ENCODE measurements at regions of chr4 and their contacts with region 1.

Region 1: DNA sequence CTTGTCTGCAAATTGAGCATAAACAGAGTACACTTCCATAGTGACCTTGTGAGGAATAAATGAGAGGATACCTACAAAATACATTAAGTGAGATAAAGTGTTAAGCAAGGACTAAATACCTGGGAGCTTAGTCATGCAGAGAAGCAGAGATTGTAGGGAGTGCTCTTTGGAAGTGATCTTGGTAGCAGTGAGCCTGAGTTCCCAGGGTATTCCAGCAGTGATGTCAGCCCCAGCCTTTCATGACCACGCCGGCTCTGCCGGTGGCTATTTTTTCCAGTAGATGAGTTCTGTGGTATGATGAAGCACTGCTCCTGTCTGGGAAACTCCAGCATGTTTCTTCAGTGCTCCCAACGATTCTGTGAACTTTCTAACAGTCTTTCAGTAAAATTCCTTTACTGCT is 391.5 kb upstream of the IGFBP7 start:
- DNase-seq: no peak
- H3K4me3 ChIP-seq: no peak overlapping the region
- H3K27ac ChIP-seq: peak overlapping the region; percentile 23 to 66 (median 60)
- H3K4me1 ChIP-seq: peaks cover 10 to 33% (median 30%) of the 10 kb centered on the region in 4 donors
- H3K27me3 ChIP-seq: no peaks in the 10 kb centered on the region
- CTCF ChIP-seq: no peak
- EP300 ChIP-seq: no peak
- POLR2A ChIP-seq: no peak

Region 2: DNA sequence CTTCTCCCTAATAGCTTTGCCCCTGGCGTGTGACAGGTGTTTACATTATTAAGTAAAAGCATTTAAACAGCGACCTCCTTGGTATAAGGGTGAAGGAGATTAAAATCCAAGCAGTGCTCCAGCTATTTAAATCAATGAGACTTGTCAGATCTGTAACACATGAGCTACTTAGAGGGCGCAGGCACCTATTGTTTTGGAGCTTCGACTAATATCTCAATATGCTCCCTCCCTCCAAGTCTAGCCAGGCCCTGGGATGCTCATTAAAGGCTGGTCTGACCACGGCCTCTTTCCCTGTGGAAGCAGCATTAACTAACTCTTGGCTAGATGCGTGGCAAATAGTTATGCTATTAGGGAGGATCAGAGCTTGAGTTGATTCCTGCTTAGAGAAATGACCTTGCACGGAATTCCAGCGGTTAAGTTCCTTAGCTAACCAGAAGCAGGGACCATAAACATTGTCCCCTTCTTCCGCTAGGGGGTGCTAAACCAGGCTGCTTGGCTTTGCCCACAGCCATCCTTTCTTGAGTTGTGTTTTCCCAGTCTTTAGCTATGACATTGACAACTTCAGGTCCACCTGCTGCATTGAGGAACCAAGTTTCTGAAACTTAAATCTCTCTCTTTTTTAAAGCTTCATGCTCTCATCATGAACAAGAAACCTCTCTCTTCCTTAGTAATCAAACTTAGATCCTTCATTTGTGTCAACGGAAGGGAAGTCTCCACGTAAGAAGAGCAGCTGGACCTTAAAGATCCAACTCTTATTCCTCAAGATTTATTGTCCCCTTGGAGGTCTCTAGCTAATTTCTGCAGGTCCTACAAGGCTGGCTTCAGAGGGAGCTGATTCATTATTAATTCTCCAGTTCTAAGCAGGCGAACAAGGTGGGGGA is 310.9 kb before region 1 on chr4:
- intact Hi-C with region 1: no loop called
- DNase-seq: no peak
- H3K4me3 ChIP-seq: no peak overlapping the region
- H3K27ac ChIP-seq: peak overlapping the region in 1 of 4 donors; percentile 40
- H3K4me1 ChIP-seq: peaks cover 0 to 19% (median 18%) of the 10 kb centered on the region in 4 donors
- H3K27me3 ChIP-seq: peaks cover 0 to 9% (median 0%) of the 10 kb centered on the region in 4 donors
- CTCF ChIP-seq: peak; percentile 14 to 58 (median 15)
- EP300 ChIP-seq: no peak
- POLR2A ChIP-seq: no peak

Region 3: DNA sequence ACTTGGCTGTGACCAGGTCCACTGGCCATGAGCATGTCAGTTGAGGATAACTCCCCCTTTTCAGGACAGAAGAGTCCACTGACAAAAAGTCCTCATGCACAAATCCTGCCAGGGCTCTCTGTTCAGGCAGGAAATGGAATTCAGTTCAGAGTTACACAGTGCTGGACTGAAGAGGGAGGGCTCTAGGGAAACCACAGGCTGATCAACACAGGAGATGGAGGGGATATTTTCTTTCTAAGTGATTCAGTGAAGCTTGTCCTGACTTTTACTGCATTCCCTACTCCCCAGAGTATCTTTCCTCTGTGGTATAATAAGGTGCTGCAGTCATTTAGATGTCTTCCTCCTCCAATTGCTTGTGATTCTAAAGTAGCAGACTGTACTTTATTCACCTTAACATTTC is 56.0 kb before region 1 on chr4:
- intact Hi-C with region 1: loop called (anchors 5 kb)
- DNase-seq: no peak
- H3K4me3 ChIP-seq: no peak overlapping the region
- H3K27ac ChIP-seq: no peak overlapping the region
- H3K4me1 ChIP-seq: peaks cover 6 to 41% (median 38%) of the 10 kb centered on the region in 4 donors
- H3K27me3 ChIP-seq: no peaks in the 10 kb centered on the region
- CTCF ChIP-seq: no peak
- EP300 ChIP-seq: no peak
- POLR2A ChIP-seq: no peak

Region 4: GRCh38 chr4:57676394-57676793 is 174.7 kb after region 1 on chr4:
- intact Hi-C with region 1: no loop called
- DNase-seq: no peak
- H3K4me3 ChIP-seq: no peak overlapping the region
- H3K27ac ChIP-seq: no peak overlapping the region
- H3K4me1 ChIP-seq: peaks cover 0 to 7% (median 0%) of the 10 kb centered on the region in 4 donors
- H3K27me3 ChIP-seq: no peaks in the 10 kb centered on the region
- CTCF ChIP-seq: no peak
- EP300 ChIP-seq: no peak
- POLR2A ChIP-seq: no peak

Region 5: DNA sequence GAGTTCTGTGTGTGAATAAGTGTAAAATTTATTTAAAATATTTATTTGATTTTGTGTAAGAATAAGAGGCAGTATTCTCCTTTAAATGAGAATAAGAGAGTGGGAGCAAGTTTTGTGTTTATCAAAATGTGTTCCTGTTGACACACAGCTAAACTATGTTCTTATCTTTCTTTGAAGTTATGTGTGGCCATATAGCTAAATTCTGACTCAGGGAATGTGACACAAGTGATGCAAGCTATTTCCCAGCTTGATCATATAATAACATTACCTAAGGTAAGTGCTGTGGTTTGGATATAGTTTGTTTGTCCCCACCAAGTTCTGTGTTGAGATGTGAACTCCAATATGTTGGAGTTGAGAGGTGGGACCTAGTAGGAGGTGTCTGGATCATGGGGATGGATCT is 348.4 kb after region 1 on chr4:
- intact Hi-C with region 1: no loop called
- DNase-seq: no peak
- H3K4me3 ChIP-seq: no peak overlapping the region
- H3K27ac ChIP-seq: no peak overlapping the region
- H3K4me1 ChIP-seq: peaks cover 0 to 8% (median 3%) of the 10 kb centered on the region in 4 donors
- H3K27me3 ChIP-seq: no peaks in the 10 kb centered on the region
- CTCF ChIP-seq: no peak
- EP300 ChIP-seq: no peak
- POLR2A ChIP-seq: no peak

Measured in esophagus muscularis mucosa (tissue), 4 donors.